PC-9 (cell line): ENCODE measurements at regions of chr3 and their contacts with region 1.

Region 1: GRCh38 chr3:172666873-172667694 is 43.8 kb downstream of the NCEH1 start:
- DNase-seq: peak; percentile 79 to 82
- H3K4me3 ChIP-seq: no peak overlapping the region
- H3K27ac ChIP-seq: no peak overlapping the region
- H3K4me1 ChIP-seq: no peaks in the 10 kb centered on the region
- H3K27me3 ChIP-seq: no peaks in the 10 kb centered on the region
- CTCF ChIP-seq: peak; percentile 94

Region 2: GRCh38 chr3:171829841-171830517 is 837.1 kb before region 1 on chr3:
- CTCF ChIA-PET with region 1: no interaction called
- POLR2A ChIA-PET with region 1: no interaction called
- intact Hi-C with region 1: loop called (anchors 10 kb)
- DNase-seq: peak; percentile 54 to 77
- H3K4me3 ChIP-seq: no peak overlapping the region
- H3K27ac ChIP-seq: no peak overlapping the region
- H3K4me1 ChIP-seq: peaks cover 26% of the 10 kb centered on the region
- H3K27me3 ChIP-seq: no peaks in the 10 kb centered on the region
- CTCF ChIP-seq: peak; percentile 77

Region 3: DNA sequence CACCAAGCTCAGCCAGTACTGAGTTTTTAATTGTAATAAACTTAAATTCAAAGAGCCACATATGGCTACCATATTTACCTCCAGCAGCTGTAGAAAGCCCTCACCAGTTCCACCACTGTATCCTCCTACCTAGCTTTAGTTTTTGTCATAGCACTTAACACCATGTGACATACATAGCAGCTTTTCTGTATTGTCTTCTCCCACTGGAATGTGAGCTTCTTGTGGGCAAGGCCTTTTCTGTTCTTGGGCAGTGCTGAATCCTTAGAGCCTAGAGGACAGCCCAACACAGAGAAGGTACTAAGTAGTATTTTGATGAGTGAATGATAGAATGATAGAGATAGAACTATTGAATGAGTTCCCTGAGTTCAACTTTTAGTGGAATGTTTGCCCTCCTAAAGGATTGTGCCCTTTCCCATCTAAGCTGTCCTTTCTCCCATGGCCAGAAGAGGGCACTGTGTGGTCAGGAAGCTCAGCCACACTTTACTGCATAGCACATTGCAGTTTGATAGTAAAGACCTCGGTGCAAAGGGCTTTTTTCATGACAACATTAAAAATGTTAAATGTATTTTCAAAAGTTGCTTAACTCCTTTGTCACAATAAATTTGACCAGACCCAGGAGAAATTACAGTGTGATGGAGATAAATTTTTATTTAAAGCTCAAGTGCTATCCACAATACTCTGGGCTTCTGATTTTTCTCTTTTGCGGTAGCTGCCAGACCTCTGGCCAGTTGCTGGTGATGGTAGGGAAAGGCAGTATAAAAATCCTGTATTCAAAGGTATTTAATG is 334.6 kb before region 1 on chr3:
- CTCF ChIA-PET with region 1: interaction called, 4 read pairs
- POLR2A ChIA-PET with region 1: no interaction called
- intact Hi-C with region 1: loop called (anchors 1 kb)
- DNase-seq: peak; percentile 56 to 66
- H3K4me3 ChIP-seq: no peak overlapping the region
- H3K27ac ChIP-seq: no peak overlapping the region; the same call in 1 of the 2 replicates
- H3K4me1 ChIP-seq: 0 out of 2 replicates have a peak, but pooled peaks cover 7% of the 10 kb centered on the region
- H3K27me3 ChIP-seq: no peaks in the 10 kb centered on the region
- CTCF ChIP-seq: peak; percentile 98

Region 4: GRCh38 chr3:172476347-172476746 is 190.7 kb before region 1 on chr3:
- CTCF ChIA-PET with region 1: no interaction called
- POLR2A ChIA-PET with region 1: no interaction called
- intact Hi-C with region 1: loop called (anchors 5 kb)
- DNase-seq: no peak
- H3K4me3 ChIP-seq: peak overlapping the region; percentile 69
- H3K27ac ChIP-seq: no peak overlapping the region
- H3K4me1 ChIP-seq: 0 out of 2 replicates have a peak, but pooled peaks cover 5% of the 10 kb centered on the region
- H3K27me3 ChIP-seq: no peaks in the 10 kb centered on the region
- CTCF ChIP-seq: no peak

Region 5: GRCh38 chr3:172595641-172596393 is 71.3 kb before region 1 on chr3:
- CTCF ChIA-PET with region 1: interaction called, 9 read pairs
- POLR2A ChIA-PET with region 1: no interaction called
- intact Hi-C with region 1: loop called (anchors 1 kb)
- DNase-seq: peak; percentile 32 to 65
- H3K4me3 ChIP-seq: peak overlapping the region; percentile 25; the same call in 1 of the 2 replicates
- H3K27ac ChIP-seq: no peak overlapping the region
- H3K4me1 ChIP-seq: peaks cover 8% of the 10 kb centered on the region; the same call in 1 of the 2 replicates
- H3K27me3 ChIP-seq: no peaks in the 10 kb centered on the region
- CTCF ChIP-seq: peak; percentile 96